Activated CD4-positive, alpha-beta memory T cell treated with anti-CD3 and anti-CD28 coated beads for 36 hours (primary cell): ENCODE measurements at regions of chr19 and their contacts with region 1.

Region 1: GRCh38 chr19:17784201-17785008 is 10.5 kb upstream of the B3GNT3 start:
- DNase-seq: peak; percentile 83
- H3K4me3 Mint-ChIP-seq: no peak overlapping the region
- H3K27ac Mint-ChIP-seq: no peak overlapping the region
- H3K4me1 Mint-ChIP-seq: peaks cover 4% of the 10 kb centered on the region
- H3K27me3 Mint-ChIP-seq: no peaks in the 10 kb centered on the region

Region 2: GRCh38 chr19:17703824-17704463 is 80.5 kb before region 1 on chr19:
- CTCF ChIA-PET with region 1: interaction called, 55 read pairs
- POLR2A ChIA-PET with region 1: no interaction called
- intact Hi-C with region 1: loop called (anchors 2 kb)
- DNase-seq: peak; percentile 81
- H3K4me3 Mint-ChIP-seq: no peak overlapping the region
- H3K27ac Mint-ChIP-seq: no peak overlapping the region
- H3K4me1 Mint-ChIP-seq: no peaks in the 10 kb centered on the region
- H3K27me3 Mint-ChIP-seq: peaks cover 4% of the 10 kb centered on the region

Region 3: DNA sequence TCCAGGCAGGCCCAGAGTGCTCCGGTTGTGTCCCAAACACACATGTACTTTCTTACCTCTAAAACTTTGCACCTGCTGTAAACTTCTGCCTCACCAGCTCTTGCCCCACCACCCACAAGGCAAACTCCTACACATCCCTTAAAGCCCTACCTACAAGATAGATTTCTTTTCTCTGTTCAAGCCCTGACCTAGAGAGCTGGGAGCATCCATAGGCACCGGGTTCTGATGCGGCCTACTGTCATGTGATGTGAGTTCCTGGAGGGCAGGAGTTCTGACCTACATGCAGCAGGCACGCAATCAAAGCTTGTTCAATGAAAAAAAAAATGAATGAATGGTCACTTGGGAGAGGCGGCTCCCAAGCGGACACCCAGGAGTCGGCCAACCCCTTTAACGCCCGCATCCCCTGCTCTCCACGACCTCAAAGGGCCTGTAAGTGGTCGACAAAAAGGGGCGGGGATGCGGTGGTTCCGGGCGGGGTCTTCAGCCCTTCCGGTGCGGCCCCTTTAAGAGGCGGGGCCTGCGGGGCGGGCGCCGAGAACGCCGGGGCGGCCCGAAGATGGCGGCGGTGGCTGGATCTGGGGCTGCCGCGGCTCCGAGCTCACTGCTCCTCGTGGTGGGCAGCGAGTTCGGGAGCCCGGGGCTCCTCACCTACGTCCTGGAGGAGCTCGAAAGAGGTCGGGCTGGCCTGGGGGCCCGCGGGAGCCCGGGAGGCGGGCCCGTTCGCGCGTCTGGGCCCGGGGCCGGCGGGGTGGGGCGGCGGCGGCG is 65.3 kb before region 1 on chr19 and contains the start of gene MAP1S:
- CTCF ChIA-PET with region 1: interaction called, 3 read pairs
- POLR2A ChIA-PET with region 1: no interaction called
- intact Hi-C with region 1: loop called (anchors 1 kb)
- DNase-seq: peak; percentile 76
- H3K4me3 Mint-ChIP-seq: peak within 1 kb of the TSS; percentile 83
- H3K27ac Mint-ChIP-seq: peak within 1 kb of the TSS; percentile 77
- H3K4me1 Mint-ChIP-seq: peaks cover 30% of the 10 kb centered on the region
- H3K27me3 Mint-ChIP-seq: no peaks in the 10 kb centered on the region
- total RNA-seq, gene MAP1S: 63.0 to 71.2 TPM

Region 4: DNA sequence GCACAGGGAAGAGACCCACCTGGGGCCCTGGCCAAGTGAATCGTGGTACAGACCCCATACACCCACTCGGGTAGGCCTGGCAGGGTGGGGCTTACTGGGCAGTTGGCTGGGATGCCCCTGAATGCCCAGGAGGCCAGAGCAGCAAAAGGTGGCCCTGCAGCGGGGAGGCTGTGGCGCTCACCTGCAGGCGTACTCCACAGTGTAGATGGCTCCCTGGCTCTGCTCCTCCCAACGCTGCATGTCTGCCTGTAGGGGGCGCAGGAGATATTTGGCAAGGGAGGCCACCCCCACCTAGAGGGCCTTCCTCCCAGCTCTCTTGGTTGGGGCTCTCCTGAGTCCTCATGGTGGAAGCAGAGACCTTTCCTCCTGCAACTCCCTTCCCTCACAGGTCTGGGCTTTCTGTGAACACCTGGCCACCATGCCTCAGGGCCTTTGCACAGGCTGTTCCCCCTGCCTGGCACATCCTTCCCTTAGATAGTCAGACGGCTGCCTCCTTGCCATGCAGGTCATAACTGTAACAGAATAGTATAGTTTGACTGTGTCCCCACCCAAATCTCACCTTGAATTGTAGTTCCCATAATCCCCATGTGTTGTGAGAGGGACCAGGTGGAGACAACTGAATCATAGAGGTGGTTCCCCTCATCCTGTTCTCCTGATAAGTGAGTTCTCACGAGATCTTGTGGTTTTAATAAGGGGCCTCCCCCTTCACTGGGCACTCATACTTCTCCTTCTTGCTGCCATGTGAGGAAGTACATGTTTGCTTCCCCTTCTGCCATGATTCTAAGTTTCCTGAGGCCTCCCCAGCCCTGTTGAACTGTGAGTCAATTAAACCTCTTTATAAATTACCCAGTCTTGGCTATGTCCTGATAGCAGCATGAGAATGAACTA is 1401.7 kb after region 1 on chr19:
- CTCF ChIA-PET with region 1: no interaction called
- POLR2A ChIA-PET with region 1: no interaction called
- intact Hi-C with region 1: no loop called
- DNase-seq: peak; percentile 70
- H3K4me3 Mint-ChIP-seq: no peak overlapping the region
- H3K27ac Mint-ChIP-seq: no peak overlapping the region
- H3K4me1 Mint-ChIP-seq: peaks cover 30% of the 10 kb centered on the region
- H3K27me3 Mint-ChIP-seq: no peaks in the 10 kb centered on the region